A673 (cell line): ENCODE measurements at regions of chr10 and their contacts with region 1.

Region 1: GRCh38 chr10:97072851-97073665 is 112.7 kb downstream of the SLIT1 start:
- DNase-seq: peak; percentile 83
- H3K4me3 ChIP-seq: no peak overlapping the region
- H3K27ac ChIP-seq: no peak overlapping the region
- H3K4me1 ChIP-seq: no peaks in the 10 kb centered on the region
- H3K27me3 ChIP-seq: peaks cover 28% of the 10 kb centered on the region
- CTCF ChIP-seq: peak; percentile 91

Region 2: DNA sequence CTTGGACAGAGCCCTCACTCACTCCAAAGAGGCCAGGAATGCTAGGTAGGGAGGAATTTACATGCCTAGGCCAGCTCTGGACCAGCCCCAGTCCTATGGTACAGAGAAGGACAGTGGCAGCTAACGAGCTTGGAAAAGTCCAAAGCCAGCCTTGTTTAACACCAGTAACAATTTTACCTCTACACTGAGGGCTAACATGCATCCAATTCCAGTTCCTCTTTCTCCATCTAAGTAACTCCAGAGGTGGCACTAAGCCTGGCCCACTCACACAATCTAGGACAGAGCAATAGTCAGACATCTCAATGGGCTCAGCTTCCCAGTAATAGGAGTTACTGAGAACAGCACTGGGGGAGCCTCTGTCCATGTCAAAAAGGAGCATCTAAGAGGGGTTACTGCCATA is 246.6 kb before region 1 on chr10:
- CTCF ChIA-PET with region 1: no interaction called
- POLR2A ChIA-PET with region 1: no interaction called
- intact Hi-C with region 1: no loop called
- DNase-seq: no peak
- H3K4me3 ChIP-seq: no peak overlapping the region
- H3K27ac ChIP-seq: no peak overlapping the region
- H3K4me1 ChIP-seq: peaks cover 4% of the 10 kb centered on the region
- H3K27me3 ChIP-seq: no peaks in the 10 kb centered on the region
- CTCF ChIP-seq: no peak

Region 3: DNA sequence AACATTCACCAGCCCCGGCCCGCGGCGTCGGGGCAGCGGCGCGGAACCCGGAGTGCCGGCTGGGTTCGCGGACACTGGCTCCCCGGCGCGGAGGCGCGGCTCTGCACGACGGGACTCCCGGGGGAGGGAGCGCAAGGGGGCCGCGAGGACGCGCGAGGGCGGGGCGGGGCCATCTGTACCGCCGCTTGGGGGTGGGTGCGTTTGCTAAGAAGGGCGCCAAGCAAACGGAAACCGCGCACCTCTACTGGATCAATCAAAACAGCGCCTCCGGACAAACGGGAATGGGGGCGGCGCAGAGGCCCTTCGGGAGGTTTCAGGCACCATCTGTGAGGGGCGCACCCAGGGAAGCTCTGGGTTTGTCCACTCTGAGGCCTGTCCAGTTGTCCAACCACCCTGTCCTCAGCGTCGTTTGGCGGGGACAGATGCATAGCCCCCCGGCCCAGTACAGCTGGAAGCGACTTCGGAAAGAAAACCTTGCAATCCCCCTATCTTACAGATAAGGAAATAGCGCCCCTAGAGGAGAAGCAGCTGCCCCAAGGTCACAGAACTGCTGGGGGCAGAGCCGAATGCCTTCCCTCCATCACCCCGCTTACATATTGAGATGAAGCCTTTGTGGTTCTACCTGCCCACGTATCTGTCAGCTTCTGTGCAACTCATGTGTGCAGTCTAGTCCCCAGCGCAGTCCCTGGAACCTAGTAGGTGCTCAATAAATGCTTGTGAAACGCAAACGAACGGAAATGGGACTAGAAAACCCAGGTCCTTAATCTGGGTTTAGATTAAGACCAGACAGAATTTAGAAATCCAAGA is 123.4 kb after region 1 on chr10:
- CTCF ChIA-PET with region 1: interaction called, 16 read pairs
- POLR2A ChIA-PET with region 1: no interaction called
- intact Hi-C with region 1: no loop called
- DNase-seq: peak; percentile 78
- H3K4me3 ChIP-seq: peak overlapping the region; percentile 51
- H3K27ac ChIP-seq: no peak overlapping the region
- H3K4me1 ChIP-seq: peaks cover 10% of the 10 kb centered on the region
- H3K27me3 ChIP-seq: peaks cover 3% of the 10 kb centered on the region
- CTCF ChIP-seq: peak; percentile 83

Region 4: DNA sequence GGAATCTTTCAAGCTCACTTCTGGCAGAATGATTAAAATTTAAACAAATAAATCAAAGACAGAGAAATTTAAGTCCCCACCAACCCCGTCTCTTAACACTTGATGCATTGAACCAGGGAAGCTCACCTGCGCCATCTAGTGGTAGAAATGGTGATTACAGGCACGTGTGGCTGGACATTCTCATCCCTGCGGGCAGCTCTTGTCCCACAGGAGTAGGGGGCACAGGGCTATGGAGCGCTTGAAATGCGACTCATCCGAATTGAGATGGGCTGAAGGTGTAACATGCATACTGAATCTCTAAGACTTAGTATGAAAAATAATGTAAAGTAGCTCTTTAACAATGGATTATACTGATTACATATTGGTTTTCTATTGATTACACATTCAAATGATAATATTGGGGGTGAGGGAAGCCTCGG is 137.5 kb after region 1 on chr10:
- CTCF ChIA-PET with region 1: interaction called, 87 read pairs
- POLR2A ChIA-PET with region 1: interaction called, 17 read pairs
- intact Hi-C with region 1: loop called (anchors 1 kb)
- DNase-seq: peak; percentile 79
- H3K4me3 ChIP-seq: no peak overlapping the region
- H3K27ac ChIP-seq: no peak overlapping the region
- H3K4me1 ChIP-seq: no peaks in the 10 kb centered on the region
- H3K27me3 ChIP-seq: no peaks in the 10 kb centered on the region
- CTCF ChIP-seq: peak; percentile 96

Region 5: GRCh38 chr10:97234400-97234799 is 161.3 kb after region 1 on chr10:
- CTCF ChIA-PET with region 1: interaction called, 6 read pairs
- POLR2A ChIA-PET with region 1: no interaction called
- intact Hi-C with region 1: loop called (anchors 1 kb)
- DNase-seq: peak; percentile 63
- H3K4me3 ChIP-seq: no peak overlapping the region
- H3K27ac ChIP-seq: no peak overlapping the region
- H3K4me1 ChIP-seq: no peaks in the 10 kb centered on the region
- H3K27me3 ChIP-seq: no peaks in the 10 kb centered on the region
- CTCF ChIP-seq: peak; percentile 72

Region 6: GRCh38 chr10:97714048-97714371 is 641.0 kb after region 1 on chr10:
- CTCF ChIA-PET with region 1: no interaction called
- POLR2A ChIA-PET with region 1: no interaction called
- intact Hi-C with region 1: no loop called
- DNase-seq: peak; percentile 78
- H3K4me3 ChIP-seq: peak overlapping the region; percentile 82
- H3K27ac ChIP-seq: peak overlapping the region; percentile 83
- H3K4me1 ChIP-seq: peaks cover 27% of the 10 kb centered on the region
- H3K27me3 ChIP-seq: no peaks in the 10 kb centered on the region
- CTCF ChIP-seq: peak; percentile 43; the same call in 1 of the 2 replicates